ENCODE measurements at regions of chr12 and their contacts with region 1.

Region 1: GRCh38 chr12:56117778-56118687 is at the start of gene ZC3H10:
- DNase-seq: peak; percentile 96 to 99 (median 97)
- ATAC-seq: peak; percentile 86 to 92 (median 87)
- H3K4me3 ChIP-seq: peak within 1 kb of the TSS; percentile 65 to 95 (median 78)
- H3K27ac ChIP-seq: peak within 1 kb of the TSS; percentile 72 to 98 (median 94)
- H3K4me1 ChIP-seq: peaks cover 0 to 53% (median 25%) of the 10 kb centered on the region in 12 donors
- H3K27me3 ChIP-seq: no peaks in the 10 kb centered on the region
- CTCF ChIP-seq: peak in 11 of 12 donors; percentile 24 to 80 (median 57)
- POLR2A ChIP-seq: peak in 1 of 2 donors; percentile 89
- total RNA-seq, gene ZC3H10: 2.7 to 6.4 (median 4.9) TPM

Region 2: DNA sequence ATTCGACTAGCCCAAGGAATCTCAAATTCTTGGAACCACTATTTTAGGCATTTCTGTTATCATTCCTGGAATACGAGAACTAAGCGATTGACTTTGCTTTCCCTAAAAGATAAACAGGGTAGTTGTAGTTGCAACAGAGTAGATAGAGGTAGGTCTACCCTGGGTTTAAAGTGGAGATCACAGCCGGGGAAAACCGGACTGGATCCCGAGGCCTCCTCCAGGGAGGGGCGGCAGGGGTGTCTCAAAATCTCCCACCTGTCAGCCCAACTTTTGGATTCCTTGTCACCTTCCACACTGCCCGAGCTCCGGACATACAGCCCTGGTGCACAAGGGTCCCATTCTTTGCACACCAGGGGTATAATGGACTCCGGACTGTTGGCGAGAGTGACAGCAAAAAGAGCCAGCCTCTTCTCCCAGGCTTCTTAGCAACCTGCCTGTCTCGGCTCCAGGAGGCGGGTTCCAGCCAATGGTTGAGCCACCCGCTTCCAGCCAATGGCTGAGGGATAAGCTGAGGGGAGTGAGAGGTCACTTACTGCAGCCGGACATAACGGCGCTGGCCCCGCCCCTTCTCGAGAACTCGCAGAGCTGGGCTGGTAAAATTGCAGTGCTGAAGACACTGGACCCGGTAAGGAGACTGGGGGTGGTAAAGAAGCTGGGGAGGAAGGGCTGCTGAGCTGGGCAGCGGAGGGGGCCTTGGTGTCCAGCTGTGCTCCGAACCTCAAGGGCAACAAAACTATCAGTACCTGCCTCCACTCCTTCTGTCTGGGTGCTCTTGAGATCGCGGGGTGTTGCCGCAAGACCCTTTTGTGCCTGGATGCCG is 121.1 kb before region 1 on chr12 and contains the start of gene SUOX:
- intact Hi-C with region 1: loop called in 2 of 10 experiments (anchors 5 kb)
- DNase-seq: peak; percentile 97 to 98 (median 97)
- ATAC-seq: peak; percentile 99 to 100 (median 100)
- H3K4me3 ChIP-seq: peak within 1 kb of the TSS; percentile 27 to 82 (median 68)
- H3K27ac ChIP-seq: peak within 1 kb of the TSS; percentile 63 to 94 (median 87)
- H3K4me1 ChIP-seq: peaks cover 0 to 21% (median 11%) of the 10 kb centered on the region in 12 donors
- H3K27me3 ChIP-seq: no peaks in the 10 kb centered on the region
- CTCF ChIP-seq: no peak
- POLR2A ChIP-seq: peak in 1 of 2 donors; percentile 64
- total RNA-seq, gene SUOX: 25.0 to 59.5 (median 32.0) TPM

Region 3: GRCh38 chr12:56104109-56104814 is 13.8 kb before region 1 on chr12 and contains the start of gene PA2G4:
- intact Hi-C with region 1: loop called in 1 of 10 experiments (anchors 1 kb)
- DNase-seq: peak; percentile 98 to 99 (median 99)
- ATAC-seq: peak; percentile 98 to 99 (median 99)
- H3K4me3 ChIP-seq: peak within 1 kb of the TSS; percentile 45 to 93 (median 84)
- H3K27ac ChIP-seq: peak within 1 kb of the TSS; percentile 6 to 92 (median 84)
- H3K4me1 ChIP-seq: peaks cover 0 to 37% (median 22%) of the 10 kb centered on the region in 12 donors
- H3K27me3 ChIP-seq: no peaks in the 10 kb centered on the region
- CTCF ChIP-seq: peak in 1 of 12 donors; percentile 7
- POLR2A ChIP-seq: peak; percentile 55 to 93
- total RNA-seq, gene PA2G4: 66.0 to 105 (median 72.4) TPM

Region 4: GRCh38 chr12:56224102-56224701 is 106.2 kb after region 1 on chr12 and contains the start of gene NABP2:
- intact Hi-C with region 1: loop called in 6 of 10 experiments (anchors 1 to 2 kb)
- DNase-seq: peak; percentile 98 to 99 (median 99)
- ATAC-seq: peak; percentile 80 to 90 (median 85)
- H3K4me3 ChIP-seq: peak within 1 kb of the TSS; percentile 52 to 97 (median 66)
- H3K27ac ChIP-seq: peak within 1 kb of the TSS; percentile 19 to 98 (median 92)
- H3K4me1 ChIP-seq: peaks cover 8 to 46% (median 37%) of the 10 kb centered on the region in 12 donors
- H3K27me3 ChIP-seq: no peaks in the 10 kb centered on the region
- CTCF ChIP-seq: peak; percentile 66 to 98 (median 91)
- POLR2A ChIP-seq: peak in 1 of 2 donors; percentile 55
- total RNA-seq, gene NABP2: 18.0 to 27.4 (median 20.7) TPM

Region 5: DNA sequence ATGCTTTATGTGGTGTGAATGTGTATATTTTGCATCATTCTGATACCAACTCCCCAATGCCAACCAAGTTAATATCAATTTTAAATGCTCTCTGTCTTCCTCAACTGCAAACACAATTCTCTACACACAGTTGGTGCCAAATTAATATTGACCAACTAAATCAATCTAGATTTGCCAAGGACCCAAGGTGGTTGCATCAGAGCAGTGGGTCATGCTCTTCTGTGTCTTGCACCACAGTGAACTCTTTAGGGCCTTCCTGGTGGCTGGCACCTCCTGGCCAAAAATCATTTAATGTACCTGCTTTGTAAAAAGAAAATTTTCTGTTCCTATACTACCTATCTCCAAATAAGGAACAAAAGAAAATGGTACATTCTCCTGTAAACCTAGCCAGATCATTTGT is 162.8 kb after region 1 on chr12:
- intact Hi-C with region 1: no loop called
- DNase-seq: no peak
- ATAC-seq: no peak
- H3K4me3 ChIP-seq: no peak overlapping the region
- H3K27ac ChIP-seq: no peak overlapping the region
- H3K4me1 ChIP-seq: peaks cover 0 to 5% (median 2%) of the 10 kb centered on the region in 12 donors
- H3K27me3 ChIP-seq: no peaks in the 10 kb centered on the region
- CTCF ChIP-seq: no peak
- POLR2A ChIP-seq: no peak

Region 6: GRCh38 chr12:56315622-56316473 is 197.8 kb after region 1 on chr12 and contains the start of gene CNPY2:
- intact Hi-C with region 1: loop called in 2 of 10 experiments (anchors 5 to 10 kb)
- DNase-seq: peak; percentile 95 to 97 (median 97)
- ATAC-seq: peak; percentile 93 to 96 (median 96)
- H3K4me3 ChIP-seq: peak within 1 kb of the TSS; percentile 44 to 97 (median 88)
- H3K27ac ChIP-seq: peak within 1 kb of the TSS; percentile 84 to 99 (median 93)
- H3K4me1 ChIP-seq: peaks cover 0 to 20% (median 13%) of the 10 kb centered on the region in 12 donors
- H3K27me3 ChIP-seq: no peaks in the 10 kb centered on the region
- CTCF ChIP-seq: peak in 8 of 12 donors; percentile 14 to 36 (median 24)
- POLR2A ChIP-seq: peak in 1 of 2 donors; percentile 80
- total RNA-seq, gene CNPY2: 26.8 to 61.0 (median 35.6) TPM

Region 7: GRCh38 chr12:56359851-56360767 is 242.1 kb after region 1 on chr12 and contains the start of gene STAT2:
- intact Hi-C with region 1: no loop called
- DNase-seq: peak; percentile 99 to 100 (median 99)
- ATAC-seq: peak; percentile 98 to 99 (median 99)
- H3K4me3 ChIP-seq: peak within 1 kb of the TSS; percentile 64 to 91 (median 83)
- H3K27ac ChIP-seq: peak within 1 kb of the TSS; percentile 68 to 98 (median 92)
- H3K4me1 ChIP-seq: peaks cover 0 to 40% (median 20%) of the 10 kb centered on the region in 12 donors
- H3K27me3 ChIP-seq: no peaks in the 10 kb centered on the region
- CTCF ChIP-seq: peak in 1 of 12 donors; percentile 9
- POLR2A ChIP-seq: peak; percentile 17 to 80
- total RNA-seq, gene STAT2: 31.4 to 150 (median 37.1) TPM

Measured in heart left ventricle (tissue), 16 donors.